K562 (cell line): ENCODE measurements at regions of chr3 and their contacts with region 1.

Region 1: GRCh38 chr3:152183473-152183872 is 85.3 kb upstream of the MBNL1 start:
- DNase-seq: peak; percentile 51 to 88 (median 63)
- ATAC-seq: peak; percentile 97
- H3K4me3 ChIP-seq: no peak overlapping the region
- H3K27ac ChIP-seq: no peak overlapping the region
- H3K4me1 ChIP-seq: peaks cover 0 to 10% of the 10 kb centered on the region in 2 experiments; a peak in 2 of 5 replicates
- H3K27me3 ChIP-seq: no peaks in the 10 kb centered on the region
- CTCF ChIP-seq: peak; percentile 73 to 84 (median 78)
- EP300 ChIP-seq: no peak
- POLR2A ChIP-seq: no peak
- RAD21 ChIP-seq: peak; percentile 83 to 94

Region 2: GRCh38 chr3:152026033-152026556 is 157.4 kb before region 1 on chr3:
- CTCF ChIA-PET with region 1: no interaction called
- POLR2A ChIA-PET with region 1: no interaction called
- in situ Hi-C with region 1: no loop called
- intact Hi-C with region 1: no loop called
- DNase-seq: peak in 1 of 4 experiments; percentile 20
- ATAC-seq: no peak
- H3K4me3 ChIP-seq: no peak overlapping the region
- H3K27ac ChIP-seq: no peak overlapping the region
- H3K4me1 ChIP-seq: no peaks in the 10 kb centered on the region
- H3K27me3 ChIP-seq: no peaks in the 10 kb centered on the region
- CTCF ChIP-seq: peak in 1 of 3 experiments; percentile 43; a peak in 2 of 6 replicates
- EP300 ChIP-seq: no peak
- POLR2A ChIP-seq: no peak
- RAD21 ChIP-seq: peak; percentile 26 to 49

Region 3: GRCh38 chr3:152071924-152072323 is 111.5 kb before region 1 on chr3:
- CTCF ChIA-PET with region 1: no interaction called
- POLR2A ChIA-PET with region 1: interaction called, 4 read pairs
- in situ Hi-C with region 1: no loop called
- intact Hi-C with region 1: loop called (anchors 5 kb)
- DNase-seq: peak in 2 of 4 experiments; percentile 46 to 50
- ATAC-seq: peak; percentile 97
- H3K4me3 ChIP-seq: no peak overlapping the region
- H3K27ac ChIP-seq: no peak overlapping the region
- H3K4me1 ChIP-seq: no peaks in the 10 kb centered on the region
- H3K27me3 ChIP-seq: no peaks in the 10 kb centered on the region
- CTCF ChIP-seq: peak; percentile 51 to 61 (median 57)
- EP300 ChIP-seq: no peak
- POLR2A ChIP-seq: no peak
- RAD21 ChIP-seq: peak; percentile 26 to 78; a peak in 3 of 4 replicates

Region 4: DNA sequence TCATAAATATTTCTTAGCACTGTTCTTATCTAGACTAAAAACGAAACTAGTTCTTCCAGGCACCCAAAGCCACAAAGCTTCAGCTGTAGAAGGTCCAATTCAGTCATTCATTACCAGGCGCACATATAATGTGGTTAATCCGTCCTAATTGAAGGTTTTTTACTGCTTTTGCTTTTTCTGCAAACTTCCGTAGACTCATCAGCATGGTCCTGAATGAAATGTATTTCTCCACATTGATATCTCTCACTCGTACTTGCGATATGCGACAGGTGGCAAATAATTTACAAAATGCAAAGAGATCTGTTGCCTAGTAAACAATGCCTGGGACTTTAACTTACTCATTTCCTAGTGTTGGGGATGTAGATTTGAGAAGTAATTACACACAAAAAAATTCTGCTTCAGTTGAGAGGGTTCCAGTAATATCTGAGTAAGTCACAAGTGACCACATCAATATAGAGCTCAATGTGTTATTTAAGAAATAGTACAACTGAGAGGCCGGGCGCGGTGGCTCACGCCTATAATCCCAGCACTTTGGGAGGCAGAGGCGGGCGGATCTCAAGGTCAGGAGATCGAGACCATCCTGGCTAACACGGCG is 10.3 kb after region 1 on chr3:
- CTCF ChIA-PET with region 1: no interaction called
- POLR2A ChIA-PET with region 1: interaction called, 16 read pairs
- in situ Hi-C with region 1: no loop called
- intact Hi-C with region 1: no loop called
- DNase-seq: peak in 1 of 4 experiments; percentile 54
- ATAC-seq: peak; percentile 56
- H3K4me3 ChIP-seq: peak overlapping the region; percentile 39
- H3K27ac ChIP-seq: peak overlapping the region; percentile 86
- H3K4me1 ChIP-seq: peaks cover 0 to 40% of the 10 kb centered on the region in 2 experiments; a peak in 3 of 5 replicates
- H3K27me3 ChIP-seq: no peaks in the 10 kb centered on the region
- CTCF ChIP-seq: no peak
- EP300 ChIP-seq: no peak
- POLR2A ChIP-seq: no peak
- RAD21 ChIP-seq: no peak

Region 5: DNA sequence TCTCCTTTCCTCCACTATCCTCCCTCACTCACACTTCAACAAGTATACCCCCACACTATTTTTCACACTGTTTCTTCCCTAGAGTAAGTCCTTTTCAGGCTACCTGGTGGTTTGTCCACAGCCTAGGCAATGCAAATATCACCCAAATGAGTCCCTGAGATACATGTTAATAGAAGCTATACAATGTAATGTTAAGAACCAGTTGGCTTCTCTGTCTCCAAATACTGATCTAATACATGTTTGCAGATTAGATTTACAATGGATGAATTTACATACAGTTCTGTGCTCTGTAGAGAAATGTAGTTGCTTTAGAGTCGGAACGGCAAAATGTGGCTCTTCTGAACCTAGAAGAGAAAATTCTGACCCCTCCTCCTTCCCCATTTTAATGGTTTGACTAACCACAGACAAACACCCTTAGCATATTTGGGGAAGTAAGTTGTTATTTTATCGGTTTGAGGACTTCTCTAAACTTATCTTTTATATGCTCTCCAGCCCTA is 21.7 kb after region 1 on chr3:
- CTCF ChIA-PET with region 1: no interaction called
- POLR2A ChIA-PET with region 1: interaction called, 11 read pairs
- in situ Hi-C with region 1: no loop called
- intact Hi-C with region 1: no loop called
- DNase-seq: peak in 1 of 4 experiments; percentile 61
- ATAC-seq: peak; percentile 68
- H3K4me3 ChIP-seq: peak overlapping the region; percentile 36
- H3K27ac ChIP-seq: peak overlapping the region; percentile 84
- H3K4me1 ChIP-seq: peaks cover 8 to 20% of the 10 kb centered on the region in 2 experiments
- H3K27me3 ChIP-seq: no peaks in the 10 kb centered on the region
- CTCF ChIP-seq: no peak
- EP300 ChIP-seq: peak; percentile 48; the same call in 1 of the 2 replicates
- POLR2A ChIP-seq: no peak
- RAD21 ChIP-seq: no peak